Activated CD8-positive, alpha-beta T cell treated with anti-CD3 and anti-CD28 coated beads, Interleukin-2, amount 10 ng/mL, durations not matched to agents 7 days and 5 days (primary cell): ENCODE measurements at regions of chr17 and their contacts with region 1.

Region 1: DNA sequence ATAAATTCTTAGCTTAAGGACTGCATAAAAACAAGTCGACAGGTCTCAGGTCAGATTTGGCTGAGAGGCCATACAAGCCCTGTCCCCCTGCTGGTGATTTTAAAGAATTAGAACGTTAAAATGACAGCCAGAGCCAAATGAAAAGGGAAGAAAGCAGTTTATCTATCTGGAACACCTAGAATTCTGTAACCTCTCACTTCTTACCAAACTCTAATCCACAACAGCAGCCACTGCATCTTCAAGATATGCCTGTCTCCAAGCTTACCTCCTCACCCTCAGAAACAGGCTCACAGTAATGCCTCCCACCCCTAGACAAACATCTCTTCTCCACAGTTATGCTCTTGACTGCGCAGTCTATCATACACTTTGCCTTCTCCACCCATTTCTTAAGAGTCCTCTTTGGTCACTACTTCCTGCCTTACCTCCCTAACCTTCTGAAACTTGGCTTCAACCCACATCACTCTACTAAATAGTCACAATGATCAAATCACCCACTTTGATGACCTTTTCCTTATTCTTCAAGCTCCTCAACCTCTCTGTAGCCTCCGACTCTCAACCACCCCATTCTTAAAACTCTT is 14.2 kb downstream of the ANKFY1 start:
- DNase-seq: no peak
- ATAC-seq: no peak
- H3K4me3 Mint-ChIP-seq: no peak overlapping the region
- H3K27ac Mint-ChIP-seq: peak overlapping the region; percentile 37
- H3K4me1 Mint-ChIP-seq: peaks cover 27% of the 10 kb centered on the region
- H3K27me3 Mint-ChIP-seq: no peaks in the 10 kb centered on the region

Region 2: GRCh38 chr17:4229627-4230541 is 19.7 kb before region 1 on chr17:
- CTCF ChIA-PET with region 1: interaction called, 13 read pairs
- POLR2A ChIA-PET with region 1: interaction called, 3 read pairs
- DNase-seq: no peak
- ATAC-seq: no peak
- H3K4me3 Mint-ChIP-seq: no peak overlapping the region
- H3K27ac Mint-ChIP-seq: no peak overlapping the region
- H3K4me1 Mint-ChIP-seq: peaks cover 16% of the 10 kb centered on the region
- H3K27me3 Mint-ChIP-seq: no peaks in the 10 kb centered on the region

Region 3: GRCh38 chr17:4236456-4236855 is 13.1 kb before region 1 on chr17:
- CTCF ChIA-PET with region 1: interaction called, 10 read pairs
- POLR2A ChIA-PET with region 1: no interaction called
- DNase-seq: no peak
- ATAC-seq: no peak
- H3K4me3 Mint-ChIP-seq: no peak overlapping the region
- H3K27ac Mint-ChIP-seq: no peak overlapping the region
- H3K4me1 Mint-ChIP-seq: peaks cover 16% of the 10 kb centered on the region
- H3K27me3 Mint-ChIP-seq: no peaks in the 10 kb centered on the region

Region 4: DNA sequence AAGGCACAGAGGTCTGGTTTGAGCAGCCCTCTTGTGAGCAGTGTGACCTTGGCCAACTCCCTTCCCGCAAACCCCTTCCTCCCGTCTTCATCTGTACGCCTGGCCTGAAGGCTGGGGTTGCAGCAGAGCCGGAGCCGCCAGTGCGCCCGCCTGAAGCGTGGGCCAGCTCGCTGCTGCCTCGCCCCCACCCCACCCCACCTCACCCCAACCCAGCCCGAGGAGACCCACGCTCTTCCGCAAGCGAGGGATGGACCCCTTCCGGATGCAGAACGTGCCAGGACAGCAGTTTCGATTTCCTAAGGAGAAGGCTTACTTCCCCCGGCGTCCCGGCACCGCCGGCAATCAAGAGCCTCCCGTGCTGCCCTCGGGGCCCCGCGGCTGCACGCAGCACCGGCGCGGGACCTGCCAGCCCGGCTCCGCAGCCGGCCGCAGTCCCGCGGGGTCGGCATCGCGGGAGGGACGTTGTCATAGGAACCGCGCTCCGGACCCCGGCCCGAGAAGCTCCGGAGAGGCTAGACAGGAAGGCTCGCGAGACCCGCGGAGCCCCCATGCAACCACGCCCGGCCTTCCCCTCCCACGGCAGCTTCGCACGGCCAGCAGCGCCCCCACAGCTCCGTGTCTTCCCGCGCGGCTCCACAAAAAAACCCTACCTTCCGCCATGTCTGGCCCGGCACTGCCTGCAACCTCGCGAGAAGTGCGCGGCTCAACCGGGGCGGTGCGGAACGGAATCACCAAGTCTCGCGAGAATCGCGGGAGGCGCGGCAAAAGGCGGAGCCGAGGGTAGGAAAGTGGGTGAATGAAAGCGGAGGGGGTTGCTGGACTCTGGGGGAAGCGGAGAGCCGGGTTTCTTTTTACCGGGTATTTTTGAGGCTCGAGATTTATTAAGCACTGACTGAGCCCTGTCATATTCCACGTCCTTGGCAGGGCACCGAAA is 14.0 kb after region 1 on chr17 and contains the start of gene ANKFY1:
- CTCF ChIA-PET with region 1: interaction called, 22 read pairs
- POLR2A ChIA-PET with region 1: interaction called, 11 read pairs
- DNase-seq: peak; percentile 98
- ATAC-seq: peak; percentile 97
- H3K4me3 Mint-ChIP-seq: peak within 1 kb of the TSS; percentile 91
- H3K27ac Mint-ChIP-seq: peak within 1 kb of the TSS; percentile 89
- H3K4me1 Mint-ChIP-seq: peaks cover 38% of the 10 kb centered on the region
- H3K27me3 Mint-ChIP-seq: no peaks in the 10 kb centered on the region
- total RNA-seq, gene ANKFY1: 78.9 to 81.9 TPM